Mammary epithelial cell (primary cell): ENCODE measurements at regions of chrX and their contacts with region 1.

Region 1: DNA sequence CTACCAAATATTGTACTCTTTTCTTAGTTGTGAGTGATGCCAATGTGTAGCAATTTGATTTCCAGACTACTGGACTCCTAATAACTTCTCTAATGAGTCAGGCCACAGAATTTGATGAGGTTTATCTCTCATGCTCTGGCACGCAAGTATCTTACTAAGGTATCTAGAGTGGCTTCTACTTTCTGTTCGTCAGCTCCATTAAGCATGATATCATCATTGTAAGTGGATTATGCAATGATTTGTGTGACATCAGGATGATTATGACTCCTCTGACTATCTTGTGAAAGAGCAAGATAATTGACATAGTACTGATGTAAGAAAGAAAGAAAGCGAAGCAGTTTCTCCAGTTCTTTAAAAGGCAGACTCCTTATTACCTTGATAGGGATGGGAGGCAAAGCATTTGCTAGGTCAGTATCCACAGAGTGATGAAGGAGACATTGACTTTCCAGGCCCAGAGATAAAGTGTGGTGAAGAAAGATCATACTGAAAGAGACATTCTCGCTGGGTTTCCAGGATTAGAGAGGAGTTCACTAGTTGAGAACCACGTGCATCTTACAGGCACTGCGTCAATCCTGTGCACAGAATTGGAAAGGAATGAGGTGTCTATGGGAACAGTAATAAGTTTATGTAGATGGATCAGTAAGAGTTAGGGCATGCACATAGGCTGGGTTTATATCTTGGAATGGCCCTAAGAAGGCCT is 161.9 kb upstream of the STK26 start:
- DNase-seq: peak; percentile 33
- H3K4me3 ChIP-seq: no peak overlapping the region
- H3K27ac ChIP-seq: no peak overlapping the region
- H3K4me1 ChIP-seq: no peaks in the 10 kb centered on the region
- H3K27me3 ChIP-seq: no peaks in the 10 kb centered on the region
- CTCF ChIP-seq: no peak

Region 2: DNA sequence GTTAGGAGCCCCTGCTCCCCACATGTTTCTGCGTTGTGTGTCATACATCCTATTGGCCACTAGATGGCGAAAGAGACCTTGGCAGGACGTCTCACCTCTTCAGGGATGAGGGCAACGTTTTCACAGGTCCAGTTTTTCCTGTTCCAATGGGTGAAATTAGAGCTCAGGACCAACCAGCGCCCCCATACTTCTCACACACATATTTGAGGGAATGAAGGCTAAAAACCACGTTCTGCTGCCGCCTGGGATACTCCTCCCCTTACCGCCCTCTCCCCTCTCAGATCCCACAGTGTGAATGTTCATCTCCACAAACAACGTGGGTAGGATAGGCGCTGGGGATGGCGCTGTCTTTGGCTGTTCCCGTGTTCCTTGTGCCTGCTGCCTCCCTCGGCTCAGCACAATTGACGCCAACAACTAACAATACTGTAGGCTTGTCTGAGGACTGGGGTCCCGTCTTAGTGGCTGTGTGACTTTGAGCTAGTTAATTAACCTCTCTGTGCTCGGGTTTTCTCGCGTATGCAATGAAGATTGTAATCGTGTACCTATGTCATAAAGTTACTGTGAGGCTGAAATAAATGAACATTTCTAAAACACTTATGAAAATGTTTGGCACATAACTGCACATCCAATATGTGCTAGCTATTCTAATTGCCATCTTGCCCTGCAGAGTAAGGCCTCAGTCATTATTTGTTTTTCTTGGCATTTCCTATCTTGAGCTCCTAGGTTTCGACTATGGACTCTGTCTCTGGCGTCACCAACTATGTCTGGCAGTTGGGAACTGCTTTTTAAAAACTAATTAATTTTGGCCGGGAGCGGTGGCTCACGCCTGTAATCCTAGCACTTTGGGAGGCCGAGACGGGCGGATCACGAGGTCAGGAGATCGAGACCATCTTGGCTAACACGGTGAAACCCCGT is 19.5 kb before region 1 on chrX:
- CTCF ChIA-PET with region 1: no interaction called
- dilution Hi-C with region 1: no loop called
- in situ Hi-C with region 1: no loop called
- intact Hi-C with region 1: no loop called
- DNase-seq: peak; percentile 54
- H3K4me3 ChIP-seq: no peak overlapping the region
- H3K27ac ChIP-seq: no peak overlapping the region
- H3K4me1 ChIP-seq: no peaks in the 10 kb centered on the region
- H3K27me3 ChIP-seq: no peaks in the 10 kb centered on the region
- CTCF ChIP-seq: peak; percentile 87 to 92

Region 3: GRCh38 chrX:131923611-131924235 is 62.5 kb after region 1 on chrX:
- CTCF ChIA-PET with region 1: no interaction called
- dilution Hi-C with region 1: no loop called
- in situ Hi-C with region 1: no loop called
- intact Hi-C with region 1: no loop called
- DNase-seq: no peak
- H3K4me3 ChIP-seq: no peak overlapping the region
- H3K27ac ChIP-seq: no peak overlapping the region
- H3K4me1 ChIP-seq: no peaks in the 10 kb centered on the region
- H3K27me3 ChIP-seq: peaks cover 6% of the 10 kb centered on the region
- CTCF ChIP-seq: no peak

Region 4: GRCh38 chrX:132071260-132071659 is 210.0 kb after region 1 on chrX:
- CTCF ChIA-PET with region 1: interaction called, 5 read pairs
- dilution Hi-C with region 1: no loop called
- in situ Hi-C with region 1: loop called in 1 of 2 experiments (anchors 10 kb)
- intact Hi-C with region 1: no loop called
- DNase-seq: peak; percentile 7
- H3K4me3 ChIP-seq: no peak overlapping the region
- H3K27ac ChIP-seq: no peak overlapping the region
- H3K4me1 ChIP-seq: no peaks in the 10 kb centered on the region
- H3K27me3 ChIP-seq: no peaks in the 10 kb centered on the region
- CTCF ChIP-seq: peak; percentile 22 to 43